A549 (cell line): ENCODE measurements at regions of chr3 and their contacts with region 1.

Region 1: GRCh38 chr3:111616417-111617105 is 21.4 kb upstream of the ZBED2 start:
- DNase-seq: peak in 1 of 2 experiments; percentile 59
- ATAC-seq: peak; percentile 23 to 80; a peak in 4 of 6 replicates
- H3K4me3 ChIP-seq: no peak overlapping the region
- H3K27ac ChIP-seq: peak overlapping the region in 1 of 2 experiments; percentile 10; a peak in 1 of 6 replicates
- H3K4me1 ChIP-seq: peaks cover 14% of the 10 kb centered on the region; the same call in 1 of the 3 replicates
- CTCF ChIP-seq: peak; percentile 27; the same call in 2 of the 3 replicates
- EP300 ChIP-seq: no peak
- POLR2A ChIP-seq: no peak
- RAD21 ChIP-seq: peak in 1 of 2 experiments; percentile 52; a peak in 3 of 5 replicates

Region 2: GRCh38 chr3:111605018-111605417 is 11.5 kb before region 1 on chr3:
- CTCF ChIA-PET with region 1: interaction called, 10 read pairs
- POLR2A ChIA-PET with region 1: no interaction called
- DNase-seq: no peak
- ATAC-seq: 0 out of 6 replicates have a peak, but pooled peaks of 1 of the 2 experiments have one; percentile 34
- H3K4me3 ChIP-seq: no peak overlapping the region
- H3K27ac ChIP-seq: no peak overlapping the region
- H3K4me1 ChIP-seq: peaks cover 27% of the 10 kb centered on the region
- CTCF ChIP-seq: no peak
- EP300 ChIP-seq: no peak
- POLR2A ChIP-seq: no peak
- RAD21 ChIP-seq: no peak

Region 3: GRCh38 chr3:111812701-111813100 is 196.1 kb after region 1 on chr3:
- CTCF ChIA-PET with region 1: no interaction called
- POLR2A ChIA-PET with region 1: no interaction called
- DNase-seq: no peak
- ATAC-seq: no peak
- H3K4me3 ChIP-seq: no peak overlapping the region
- H3K27ac ChIP-seq: peak overlapping the region; percentile 72 to 84
- H3K4me1 ChIP-seq: peaks cover 55% of the 10 kb centered on the region
- CTCF ChIP-seq: no peak
- EP300 ChIP-seq: no peak
- POLR2A ChIP-seq: no peak
- RAD21 ChIP-seq: no peak

Region 4: DNA sequence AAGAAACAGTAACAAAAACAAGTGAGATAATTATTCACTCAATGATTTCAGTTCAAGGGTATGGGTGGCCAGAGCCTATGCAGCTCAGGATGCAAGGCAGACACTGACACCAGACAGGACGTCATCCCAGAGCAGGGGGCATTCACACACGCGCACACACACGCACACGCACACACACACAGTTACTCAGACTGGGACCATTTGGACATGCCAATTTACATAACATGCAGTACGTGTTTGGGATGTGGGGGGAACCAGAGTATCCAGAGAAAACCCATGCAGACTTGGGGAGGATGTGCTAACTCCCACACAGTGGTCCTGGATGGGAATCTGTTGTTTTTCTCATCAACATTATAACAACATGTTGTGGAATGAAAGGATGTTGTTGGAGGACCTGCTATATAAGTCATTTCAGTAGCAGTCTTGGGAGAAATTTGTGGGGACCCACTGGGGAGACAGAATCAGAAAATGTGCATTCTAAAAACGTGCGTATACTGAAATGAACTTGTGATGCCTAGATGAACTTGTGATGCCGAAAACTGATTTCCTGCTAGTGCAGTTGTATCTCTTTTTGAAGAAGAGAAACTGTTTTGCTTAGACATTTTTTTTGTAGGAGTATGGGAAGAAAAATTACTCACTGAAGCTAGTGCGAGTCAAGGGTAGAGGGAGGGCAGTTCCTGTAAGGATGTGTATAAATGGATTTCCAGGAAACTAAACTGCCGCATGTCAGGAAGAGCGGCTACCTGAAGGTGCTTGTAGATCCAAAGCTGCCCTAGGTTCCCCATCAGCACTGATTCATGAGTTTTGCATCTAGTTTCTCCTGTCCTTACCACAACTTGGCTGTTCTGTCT is 741.6 kb after region 1 on chr3:
- CTCF ChIA-PET with region 1: no interaction called
- POLR2A ChIA-PET with region 1: no interaction called
- DNase-seq: no peak
- ATAC-seq: no peak; a peak in 2 of 6 replicates
- H3K4me3 ChIP-seq: no peak overlapping the region
- H3K27ac ChIP-seq: no peak overlapping the region
- H3K4me1 ChIP-seq: no peaks in the 10 kb centered on the region
- CTCF ChIP-seq: no peak
- EP300 ChIP-seq: no peak
- POLR2A ChIP-seq: no peak
- RAD21 ChIP-seq: no peak